ENCODE measurements at regions of chr4 and their contacts with region 1.

Region 1: DNA sequence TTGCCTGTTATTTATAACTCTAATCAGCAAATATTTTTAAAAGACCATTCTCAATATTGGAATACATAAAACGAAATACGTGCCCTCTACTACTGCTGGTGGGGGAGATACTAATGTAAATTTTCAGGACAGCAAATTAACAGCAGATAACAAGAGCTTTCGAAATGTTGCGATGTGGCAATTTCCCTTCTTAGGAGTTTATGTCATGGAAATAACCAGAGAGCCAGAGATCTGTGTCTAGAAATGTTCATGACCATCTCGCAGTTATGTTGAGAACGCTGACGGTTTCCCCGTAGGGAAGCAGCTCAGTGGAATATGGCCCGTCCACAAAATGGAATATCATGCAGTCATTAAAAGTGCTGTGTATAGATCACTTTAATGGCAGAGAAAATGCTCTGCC is 238.4 kb upstream of the PSAPL1 start:
- DNase-seq: peak; percentile 45
- ATAC-seq: peak; percentile 7; the same call in 2 of the 3 replicates
- H3K4me3 ChIP-seq: peak overlapping the region in 2 of 3 experiments; percentile 42 to 58; a peak in 3 of 6 replicates
- H3K27ac ChIP-seq: peak overlapping the region; percentile 45
- H3K4me1 ChIP-seq: peaks cover 35% of the 10 kb centered on the region
- H3K27me3 ChIP-seq: no peaks in the 10 kb centered on the region
- CTCF ChIP-seq: no peak
- EP300 ChIP-seq: no peak
- POLR2A ChIP-seq: no peak
- RAD21 ChIP-seq: no peak

Region 2: GRCh38 chr4:7647600-7648543 is 25.2 kb before region 1 on chr4:
- CTCF ChIA-PET with region 1: no interaction called
- POLR2A ChIA-PET with region 1: interaction called, 18 read pairs
- in situ Hi-C with region 1: no loop called
- intact Hi-C with region 1: no loop called
- DNase-seq: peak; percentile 76
- ATAC-seq: peak; percentile 72
- H3K4me3 ChIP-seq: no peak overlapping the region
- H3K27ac ChIP-seq: peak overlapping the region; percentile 40
- H3K4me1 ChIP-seq: peaks cover 52% of the 10 kb centered on the region
- H3K27me3 ChIP-seq: no peaks in the 10 kb centered on the region
- CTCF ChIP-seq: no peak
- EP300 ChIP-seq: peak in 1 of 2 experiments; percentile 77; a peak in 2 of 4 replicates
- POLR2A ChIP-seq: no peak
- RAD21 ChIP-seq: no peak

Measured in HepG2 (cell line).